Naive thymus-derived CD4-positive, alpha-beta T cell (primary cell): ENCODE measurements at regions of chr6 and their contacts with region 1.

Region 1: DNA sequence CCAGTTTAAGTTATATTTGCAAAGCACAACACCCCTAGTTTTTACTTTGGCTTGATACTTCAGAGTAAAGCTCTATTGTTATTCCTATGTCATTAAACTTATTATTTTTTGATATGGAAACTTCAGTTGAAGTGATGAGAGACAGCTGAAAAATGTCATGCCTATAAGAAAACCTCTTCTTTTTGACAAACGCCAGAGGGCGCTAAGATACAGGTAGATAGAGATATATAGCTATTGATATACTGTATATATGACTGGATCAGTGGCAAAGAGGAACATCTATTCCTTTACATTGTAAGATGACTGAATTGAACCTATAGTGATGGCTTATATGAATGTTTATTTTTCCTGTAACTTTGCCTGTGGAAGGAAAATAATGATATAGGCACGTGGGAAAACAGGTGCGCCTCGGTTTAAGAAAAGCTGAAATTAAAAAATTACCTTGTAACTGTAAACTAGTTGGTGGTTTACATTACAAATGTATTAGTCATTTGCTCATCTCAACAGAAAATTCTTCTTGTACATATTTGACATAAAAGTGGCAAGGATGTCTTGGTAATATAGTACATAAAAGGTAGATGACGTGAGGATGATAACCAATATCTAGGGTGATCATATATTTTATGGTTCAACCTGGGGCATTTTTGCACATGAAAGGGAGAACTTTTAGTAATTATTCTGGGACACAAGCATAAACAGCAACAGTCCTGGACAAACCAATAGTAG is 74.1 kb downstream of the LAMA4 start:
- DNase-seq: peak in 7 of 9 donors; percentile 30 to 75 (median 59)
- ATAC-seq: peak; percentile 72
- H3K4me3 ChIP-seq: no peak overlapping the region
- H3K4me3 Mint-ChIP-seq: no peak overlapping the region
- H3K27ac ChIP-seq: no peak overlapping the region
- H3K27ac Mint-ChIP-seq: no peak overlapping the region
- H3K4me1 ChIP-seq: no peaks in the 10 kb centered on the region
- H3K4me1 Mint-ChIP-seq: no peaks in the 10 kb centered on the region
- H3K27me3 ChIP-seq: no peaks in the 10 kb centered on the region
- H3K27me3 Mint-ChIP-seq: peaks cover 6 to 43% (median 38%) of the 10 kb centered on the region in 5 donors

Region 2: DNA sequence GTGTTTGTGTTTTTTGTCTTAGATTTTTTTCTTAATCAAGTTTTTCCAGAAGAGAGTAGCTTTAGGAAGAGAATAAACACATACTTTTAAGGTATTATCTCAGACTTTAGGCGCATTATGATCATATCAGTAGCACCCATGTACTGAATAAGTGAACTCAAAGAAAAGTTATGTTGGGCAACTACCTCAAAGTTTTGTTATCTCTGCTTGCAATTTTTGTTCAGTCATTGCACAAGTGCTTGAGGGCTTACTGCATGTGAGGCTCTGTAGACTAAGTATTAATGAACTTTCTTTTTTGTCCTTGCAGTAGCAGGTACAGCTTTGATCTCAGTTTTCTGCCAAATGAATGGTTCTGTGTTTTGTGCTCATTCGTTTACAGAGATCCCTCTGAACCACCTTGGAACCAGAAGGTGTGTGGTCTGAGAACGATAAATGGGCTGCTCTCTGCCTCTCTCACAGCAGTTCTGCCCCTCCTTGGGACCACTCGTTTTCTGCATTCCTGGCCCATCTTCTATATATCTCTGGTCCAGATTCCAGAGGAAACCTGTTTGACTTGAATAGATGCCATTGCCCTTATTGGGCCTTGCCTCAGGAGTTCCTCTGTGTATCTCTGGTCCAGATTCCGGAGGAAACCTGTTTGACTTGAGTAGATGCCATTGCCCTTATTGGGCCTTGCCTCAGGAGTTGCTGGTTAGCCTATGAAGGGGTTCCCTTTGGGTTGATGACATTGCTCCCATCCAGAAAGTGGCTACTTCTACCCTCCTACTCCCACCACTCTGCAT is 903.7 kb before region 1 on chr6:
- CTCF ChIA-PET with region 1: no interaction called
- POLR2A ChIA-PET with region 1: no interaction called
- intact Hi-C with region 1: no loop called
- DNase-seq: no peak
- ATAC-seq: peak; percentile 58
- H3K4me3 ChIP-seq: no peak overlapping the region
- H3K4me3 Mint-ChIP-seq: no peak overlapping the region
- H3K27ac ChIP-seq: no peak overlapping the region
- H3K27ac Mint-ChIP-seq: no peak overlapping the region
- H3K4me1 ChIP-seq: no peaks in the 10 kb centered on the region
- H3K4me1 Mint-ChIP-seq: peaks cover 0 to 11% (median 0%) of the 10 kb centered on the region in 7 donors
- H3K27me3 ChIP-seq: no peaks in the 10 kb centered on the region
- H3K27me3 Mint-ChIP-seq: no peaks in the 10 kb centered on the region

Region 3: DNA sequence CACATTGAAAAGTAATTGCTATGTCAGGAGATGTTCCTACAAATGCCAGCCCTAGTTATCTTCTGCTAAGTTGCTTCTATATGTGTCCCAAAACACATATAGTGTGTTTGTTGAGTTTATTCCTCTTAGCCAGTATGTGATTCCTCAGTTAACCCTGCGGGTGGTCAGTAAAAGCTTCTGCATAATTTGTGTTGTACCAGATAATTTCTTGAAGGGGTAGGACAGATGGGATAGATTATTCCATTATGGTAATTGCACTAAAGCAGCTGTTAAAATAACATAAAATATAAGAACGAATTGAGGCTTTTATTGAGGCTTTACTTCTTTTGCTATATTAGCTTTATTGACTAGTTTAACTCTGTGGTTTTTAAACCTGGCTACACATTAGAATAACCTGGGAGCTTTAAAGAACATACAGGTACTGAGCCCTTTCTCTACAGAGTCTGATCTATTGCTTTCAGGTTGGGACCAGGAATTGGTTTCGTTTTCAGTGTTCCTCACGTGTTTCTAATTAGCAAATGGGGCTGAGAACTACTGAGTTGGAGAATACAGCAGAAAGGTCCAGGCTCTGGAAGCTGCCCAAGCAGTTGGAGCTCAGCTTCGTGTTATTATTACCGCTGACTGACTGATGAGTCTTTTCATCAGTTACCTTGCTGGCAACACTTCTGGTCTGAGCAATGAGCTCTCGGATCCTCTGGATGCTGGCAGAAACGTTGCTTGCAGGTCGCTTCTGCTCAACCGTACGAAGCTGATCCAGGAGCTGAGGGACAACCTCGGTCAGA is 35.9 kb before region 1 on chr6:
- CTCF ChIA-PET with region 1: no interaction called
- POLR2A ChIA-PET with region 1: no interaction called
- intact Hi-C with region 1: no loop called
- DNase-seq: no peak
- ATAC-seq: no peak
- H3K4me3 ChIP-seq: no peak overlapping the region
- H3K4me3 Mint-ChIP-seq: no peak overlapping the region
- H3K27ac ChIP-seq: no peak overlapping the region
- H3K27ac Mint-ChIP-seq: no peak overlapping the region
- H3K4me1 ChIP-seq: no peaks in the 10 kb centered on the region
- H3K4me1 Mint-ChIP-seq: no peaks in the 10 kb centered on the region
- H3K27me3 ChIP-seq: no peaks in the 10 kb centered on the region
- H3K27me3 Mint-ChIP-seq: peaks cover 0 to 28% (median 5%) of the 10 kb centered on the region in 5 donors

Region 4: GRCh38 chr6:112311950-112312547 is 131.8 kb after region 1 on chr6:
- CTCF ChIA-PET with region 1: interaction called, 10 read pairs
- POLR2A ChIA-PET with region 1: no interaction called
- intact Hi-C with region 1: loop called in 1 of 2 experiments (anchors 1 kb)
- DNase-seq: peak in 5 of 9 donors; percentile 5 to 24 (median 13)
- ATAC-seq: no peak
- H3K4me3 ChIP-seq: no peak overlapping the region
- H3K4me3 Mint-ChIP-seq: no peak overlapping the region
- H3K27ac ChIP-seq: no peak overlapping the region
- H3K27ac Mint-ChIP-seq: no peak overlapping the region
- H3K4me1 ChIP-seq: no peaks in the 10 kb centered on the region
- H3K4me1 Mint-ChIP-seq: no peaks in the 10 kb centered on the region
- H3K27me3 ChIP-seq: peaks cover 0 to 2% of the 10 kb centered on the region in 2 donors
- H3K27me3 Mint-ChIP-seq: peaks cover 15 to 34% (median 26%) of the 10 kb centered on the region in 5 donors

Region 5: DNA sequence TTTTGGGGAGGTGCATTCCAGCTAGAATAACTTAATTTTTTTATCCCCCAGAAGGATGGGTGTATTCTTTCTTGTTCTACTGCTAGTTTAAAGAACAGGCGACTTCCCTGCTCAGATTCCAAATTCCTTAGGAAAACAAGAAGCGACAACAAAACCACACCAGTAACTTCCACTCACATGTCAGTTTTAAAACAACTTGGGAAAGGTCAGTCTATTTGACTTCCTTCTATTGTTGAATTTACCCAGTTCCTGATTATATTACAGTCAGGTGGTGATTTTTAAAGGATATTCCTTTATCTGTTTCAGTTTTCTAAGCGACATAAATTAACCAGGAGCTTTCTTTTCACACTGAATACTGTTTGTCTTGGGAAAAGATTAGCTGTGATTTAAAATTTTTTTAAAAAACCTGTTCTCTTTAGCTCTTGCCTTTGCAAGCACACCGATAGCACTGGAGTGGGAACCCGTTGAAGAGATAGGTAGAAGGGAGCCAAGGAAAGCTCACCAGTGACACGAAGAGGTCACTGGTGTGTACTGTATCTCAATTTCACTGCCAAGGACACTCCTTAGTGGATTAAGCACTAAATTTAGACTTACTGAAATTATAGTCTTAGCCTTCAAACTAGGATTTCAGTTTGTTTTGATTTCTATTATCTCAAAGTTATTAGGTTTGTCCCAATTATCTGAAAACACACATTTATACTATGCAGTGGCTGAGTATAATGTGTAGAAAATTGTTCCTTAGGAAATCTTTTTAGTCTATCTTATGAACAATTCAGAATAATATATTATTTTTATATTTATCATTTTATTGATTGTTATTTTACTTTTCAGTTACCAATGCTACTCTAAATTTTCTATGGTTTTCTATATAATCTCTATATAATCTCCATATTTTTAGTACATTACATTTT is 1699.2 kb after region 1 on chr6:
- CTCF ChIA-PET with region 1: no interaction called
- POLR2A ChIA-PET with region 1: no interaction called
- intact Hi-C with region 1: loop called in 1 of 2 experiments (anchors 1 kb)
- DNase-seq: peak in 2 of 9 donors; percentile 8 to 33
- ATAC-seq: peak; percentile 74
- H3K4me3 ChIP-seq: no peak overlapping the region
- H3K4me3 Mint-ChIP-seq: no peak overlapping the region
- H3K27ac ChIP-seq: no peak overlapping the region
- H3K27ac Mint-ChIP-seq: no peak overlapping the region
- H3K4me1 ChIP-seq: no peaks in the 10 kb centered on the region
- H3K4me1 Mint-ChIP-seq: no peaks in the 10 kb centered on the region
- H3K27me3 ChIP-seq: peaks cover 0 to 3% of the 10 kb centered on the region in 2 donors
- H3K27me3 Mint-ChIP-seq: peaks cover 22 to 61% (median 36%) of the 10 kb centered on the region in 5 donors

Region 6: GRCh38 chr6:113936093-113936934 is 1756.1 kb after region 1 on chr6:
- CTCF ChIA-PET with region 1: no interaction called
- POLR2A ChIA-PET with region 1: no interaction called
- intact Hi-C with region 1: loop called in 1 of 2 experiments (anchors 1 kb)
- DNase-seq: peak in 6 of 9 donors; percentile 3 to 48 (median 24)
- ATAC-seq: peak; percentile 83
- H3K4me3 ChIP-seq: no peak overlapping the region
- H3K4me3 Mint-ChIP-seq: no peak overlapping the region
- H3K27ac ChIP-seq: no peak overlapping the region
- H3K27ac Mint-ChIP-seq: peak overlapping the region in 1 of 9 donors; percentile 32
- H3K4me1 ChIP-seq: no peaks in the 10 kb centered on the region
- H3K4me1 Mint-ChIP-seq: no peaks in the 10 kb centered on the region
- H3K27me3 ChIP-seq: no peaks in the 10 kb centered on the region
- H3K27me3 Mint-ChIP-seq: no peaks in the 10 kb centered on the region